ENCODE measurements at regions of chr17 and their contacts with region 1.

Region 1: DNA sequence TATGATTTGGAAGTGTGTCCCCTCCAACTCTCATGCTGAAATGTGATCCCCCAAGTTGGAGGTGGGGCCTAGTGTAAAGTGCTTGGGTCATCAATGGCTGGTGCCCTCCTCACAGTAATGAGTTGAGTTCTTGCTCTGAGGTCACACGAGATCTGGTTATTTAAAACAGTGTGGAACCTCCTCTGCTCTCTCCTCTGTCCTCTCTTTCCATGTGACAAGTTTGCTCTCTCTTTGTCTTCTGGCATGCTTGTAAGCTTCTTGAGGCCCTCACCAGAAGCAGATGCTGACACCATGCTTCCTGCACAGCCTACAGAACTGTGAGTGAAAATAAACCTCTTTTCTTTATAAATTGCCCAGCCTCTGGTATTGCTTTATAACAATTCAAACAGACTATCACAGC is 19.9 kb downstream of the BRIP1 start:
- DNase-seq: no peak
- ATAC-seq: no peak
- H3K4me3 ChIP-seq: no peak overlapping the region
- H3K27ac ChIP-seq: no peak overlapping the region
- H3K4me1 ChIP-seq: no peaks in the 10 kb centered on the region
- H3K27me3 ChIP-seq: no peaks in the 10 kb centered on the region
- CTCF ChIP-seq: no peak
- EP300 ChIP-seq: no peak
- POLR2A ChIP-seq: no peak
- RAD21 ChIP-seq: no peak

Region 2: GRCh38 chr17:61635913-61636432 is 207.5 kb before region 1 on chr17:
- CTCF ChIA-PET with region 1: interaction called, 21 read pairs
- POLR2A ChIA-PET with region 1: no interaction called
- RAD21 ChIA-PET with region 1: interaction called, 12 read pairs
- SMC1A ChIA-PET with region 1: interaction called, 17 read pairs
- in situ Hi-C with region 1: loop called (anchors 5 kb)
- intact Hi-C with region 1: no loop called
- DNase-seq: peak; percentile 35
- ATAC-seq: peak; percentile 76
- H3K4me3 ChIP-seq: no peak overlapping the region
- H3K27ac ChIP-seq: no peak overlapping the region
- H3K4me1 ChIP-seq: no peaks in the 10 kb centered on the region
- H3K27me3 ChIP-seq: no peaks in the 10 kb centered on the region; a peak in 1 of 4 replicates
- CTCF ChIP-seq: peak; percentile 75 to 83 (median 82)
- EP300 ChIP-seq: no peak
- POLR2A ChIP-seq: no peak
- RAD21 ChIP-seq: peak; percentile 98